Tibial artery (tissue), 4 donors: ENCODE measurements at regions of chr2 and their contacts with region 1.

Region 1: GRCh38 chr2:126527836-126528507 is 128.0 kb upstream of the GYPC start:
- DNase-seq: peak; percentile 59 to 81
- H3K4me3 ChIP-seq: no peak overlapping the region
- H3K27ac ChIP-seq: no peak overlapping the region
- H3K4me1 ChIP-seq: no peaks in the 10 kb centered on the region
- H3K27me3 ChIP-seq: no peaks in the 10 kb centered on the region
- CTCF ChIP-seq: peak; percentile 57 to 66

Region 2: GRCh38 chr2:124542932-124543640 is 1984.9 kb before region 1 on chr2:
- intact Hi-C with region 1: no loop called
- DNase-seq: no peak
- H3K4me3 ChIP-seq: no peak overlapping the region
- H3K27ac ChIP-seq: no peak overlapping the region
- H3K4me1 ChIP-seq: no peaks in the 10 kb centered on the region
- H3K27me3 ChIP-seq: no peaks in the 10 kb centered on the region
- CTCF ChIP-seq: no peak

Region 3: DNA sequence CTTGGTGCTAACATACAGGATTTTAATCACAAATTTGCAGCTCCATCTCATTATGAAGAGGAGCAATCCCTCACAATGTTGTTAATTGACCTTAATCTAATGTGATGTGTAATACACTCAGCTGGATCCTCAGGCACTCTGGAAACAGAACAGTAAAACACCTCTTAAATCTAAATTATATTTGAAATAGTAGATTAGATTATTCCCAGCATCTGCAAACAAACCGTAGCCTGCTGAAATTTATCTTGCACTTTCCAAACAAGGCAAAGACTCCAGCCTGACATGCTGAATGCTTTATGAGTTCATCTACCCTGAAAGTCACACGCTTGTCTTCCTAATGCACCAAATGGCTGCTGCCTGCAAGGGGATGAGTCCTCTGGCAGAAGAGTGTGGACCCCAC is 274.3 kb before region 1 on chr2:
- intact Hi-C with region 1: no loop called
- DNase-seq: no peak
- H3K4me3 ChIP-seq: no peak overlapping the region
- H3K27ac ChIP-seq: no peak overlapping the region
- H3K4me1 ChIP-seq: no peaks in the 10 kb centered on the region
- H3K27me3 ChIP-seq: no peaks in the 10 kb centered on the region
- CTCF ChIP-seq: no peak

Region 4: GRCh38 chr2:126644630-126645191 is 116.7 kb after region 1 on chr2:
- intact Hi-C with region 1: no loop called
- DNase-seq: no peak
- H3K4me3 ChIP-seq: no peak overlapping the region
- H3K27ac ChIP-seq: no peak overlapping the region
- H3K4me1 ChIP-seq: no peaks in the 10 kb centered on the region
- H3K27me3 ChIP-seq: no peaks in the 10 kb centered on the region
- CTCF ChIP-seq: no peak

Region 5: DNA sequence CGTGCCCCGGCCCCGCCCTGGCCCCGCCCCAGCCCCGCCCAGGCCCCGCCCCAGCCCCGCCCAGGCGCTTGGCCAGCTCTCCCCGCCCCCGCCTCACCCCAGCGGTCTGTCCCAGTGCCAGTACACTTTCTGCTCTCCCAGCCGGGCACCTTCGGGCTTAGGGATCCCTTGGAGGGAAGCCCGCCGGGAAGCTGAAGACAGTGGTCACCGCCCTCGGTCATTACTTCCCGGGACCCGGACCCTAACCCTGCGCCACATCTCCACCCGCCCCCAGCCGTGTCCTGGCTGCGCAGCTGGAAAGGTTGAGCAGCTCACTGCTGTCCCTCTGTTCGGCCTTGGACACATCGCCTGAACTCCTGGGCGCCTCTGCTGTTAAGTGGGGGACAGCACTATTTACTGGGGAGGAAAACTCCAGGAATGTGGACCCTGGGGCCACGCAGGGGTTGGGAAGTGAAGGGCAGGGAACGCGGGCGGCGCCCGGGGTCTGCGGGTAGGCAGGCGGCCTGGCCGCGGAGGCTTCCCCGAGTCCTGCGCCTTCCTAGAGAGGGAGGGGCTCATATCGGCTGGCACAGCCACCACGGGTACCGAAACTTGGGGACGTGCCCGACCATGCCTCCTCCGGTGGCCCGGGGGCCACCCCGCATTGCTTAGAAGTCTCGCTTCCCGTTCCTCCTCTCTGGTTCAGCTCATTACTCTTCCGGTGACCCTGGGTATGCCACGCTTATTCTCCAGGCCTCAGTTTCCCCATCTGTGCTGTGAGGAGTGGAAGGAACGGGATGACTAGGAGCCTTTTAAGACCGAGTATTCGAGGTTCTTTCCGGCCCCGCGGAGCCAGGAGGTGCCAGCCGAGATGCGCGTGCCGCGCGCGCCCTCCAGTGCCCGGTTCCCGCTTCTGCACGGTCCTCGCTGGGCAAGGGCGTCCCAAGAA is 249.0 kb after region 1 on chr2:
- intact Hi-C with region 1: loop called (anchors 5 kb)
- DNase-seq: peak; percentile 72 to 88
- H3K4me3 ChIP-seq: peak overlapping the region; percentile 52 to 66
- H3K27ac ChIP-seq: peak overlapping the region; percentile 49 to 67
- H3K4me1 ChIP-seq: peaks cover 0 to 13% (median 2%) of the 10 kb centered on the region in 4 donors
- H3K27me3 ChIP-seq: peaks cover 0 to 25% of the 10 kb centered on the region in 2 donors
- CTCF ChIP-seq: peak; percentile 91 to 96